Posterior vena cava (tissue), 2 donors: ENCODE measurements at regions of chr12 and their contacts with region 1.

Region 1: GRCh38 chr12:58529897-58530741 is 390.2 kb downstream of the LRIG3 start:
- DNase-seq: no peak

Region 2: DNA sequence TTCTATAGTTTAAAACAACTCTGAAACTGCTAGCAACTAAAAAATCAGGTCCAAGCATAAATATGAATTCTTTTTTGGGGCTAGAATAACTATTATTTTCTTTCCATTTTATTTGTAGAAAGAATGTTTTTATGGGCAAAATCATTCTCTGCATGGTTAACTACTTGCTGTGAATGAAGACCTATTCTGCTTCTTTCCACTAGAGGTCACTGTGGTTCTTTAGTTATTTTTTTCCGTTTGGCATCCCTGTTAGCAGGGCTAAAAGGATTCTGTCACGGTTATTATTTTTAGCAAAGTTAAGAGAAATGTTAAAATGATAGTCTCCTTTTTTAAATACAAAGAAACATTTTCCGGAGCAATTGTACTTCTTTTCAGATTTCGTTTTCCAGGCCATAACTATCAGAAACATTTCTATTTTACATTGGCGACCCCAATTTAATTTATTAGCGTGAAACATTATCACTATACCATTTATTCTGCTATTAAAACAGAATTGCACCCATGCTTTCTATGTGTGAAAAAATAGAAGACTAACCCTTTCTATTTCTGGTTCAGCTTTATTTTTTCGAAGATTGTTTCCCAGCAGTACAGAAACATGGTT is 184.0 kb before region 1 on chr12:
- intact Hi-C with region 1: loop called in 1 of 2 experiments (anchors 10 kb)
- DNase-seq: no peak